ENCODE measurements at regions of chr7 and their contacts with region 1.

Region 1: DNA sequence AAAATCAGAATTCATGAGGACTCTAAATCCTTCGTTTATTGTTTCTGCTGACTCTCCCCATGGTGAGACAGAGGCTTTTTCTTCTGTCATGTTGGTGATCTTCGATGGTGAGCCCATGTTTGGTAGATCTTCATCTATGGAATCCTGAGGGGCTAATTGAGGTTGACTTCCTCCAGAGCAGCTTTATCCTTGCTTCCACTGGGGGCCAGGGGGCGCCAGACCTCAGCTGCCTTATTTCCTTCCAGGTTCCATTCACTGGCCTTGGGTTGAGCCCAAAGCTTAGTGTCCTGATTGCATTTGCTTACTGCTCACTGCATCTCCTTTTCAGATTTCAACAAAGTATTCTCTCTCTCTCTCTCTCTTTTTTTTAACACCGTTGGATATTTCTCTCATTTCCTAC is 80.7 kb downstream of the GCC1 start:
- DNase-seq: peak; percentile 31 to 65 (median 50)
- ATAC-seq: peak; percentile 97
- H3K4me3 ChIP-seq: no peak overlapping the region
- H3K27ac ChIP-seq: no peak overlapping the region
- H3K4me1 ChIP-seq: no peaks in the 10 kb centered on the region
- H3K27me3 ChIP-seq: peaks cover 0 to 1% of the 10 kb centered on the region in 2 experiments; a peak in 1 of 5 replicates
- CTCF ChIP-seq: peak; percentile 79 to 90 (median 85)
- EP300 ChIP-seq: no peak
- POLR2A ChIP-seq: no peak
- RAD21 ChIP-seq: peak; percentile 43 to 68; a peak in 3 of 4 replicates

Region 2: DNA sequence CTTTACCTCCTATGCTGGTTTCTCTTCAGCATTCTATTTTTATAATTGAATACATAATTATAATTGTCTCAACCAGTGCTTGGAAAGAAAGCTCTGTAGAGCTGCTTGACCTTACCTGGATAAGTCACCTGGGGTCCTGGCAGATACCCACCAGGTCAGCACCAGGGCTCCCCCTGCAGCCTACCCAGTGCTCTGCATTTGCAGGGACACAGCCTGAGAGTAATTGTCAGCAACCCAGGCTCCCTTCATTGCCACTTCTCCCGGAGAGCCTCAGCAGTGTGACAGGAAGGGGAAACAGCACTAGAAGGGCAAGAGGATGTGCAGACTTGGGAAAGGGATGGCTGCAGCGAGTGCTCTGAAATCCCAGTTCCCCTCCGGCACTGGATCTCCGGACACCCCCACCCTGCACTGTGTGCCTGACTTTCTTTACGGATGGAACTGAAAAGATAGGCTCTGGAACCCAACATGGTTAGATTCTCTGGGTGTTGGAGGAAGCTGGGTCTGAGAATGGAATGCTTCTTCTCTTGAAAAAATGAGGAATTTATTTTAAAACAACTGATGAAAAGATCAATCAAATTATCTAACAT is 124.6 kb after region 1 on chr7:
- CTCF ChIA-PET with region 1: no interaction called
- POLR2A ChIA-PET with region 1: no interaction called
- in situ Hi-C with region 1: no loop called
- intact Hi-C with region 1: loop called (anchors 5 kb)
- DNase-seq: peak; percentile 51 to 71 (median 60)
- ATAC-seq: peak; percentile 95
- H3K4me3 ChIP-seq: no peak overlapping the region
- H3K27ac ChIP-seq: no peak overlapping the region
- H3K4me1 ChIP-seq: no peaks in the 10 kb centered on the region
- H3K27me3 ChIP-seq: peaks cover 10 to 18% of the 10 kb centered on the region in 2 experiments; a peak in 4 of 5 replicates
- CTCF ChIP-seq: peak; percentile 86 to 91 (median 86)
- EP300 ChIP-seq: no peak
- POLR2A ChIP-seq: no peak
- RAD21 ChIP-seq: peak; percentile 37 to 59

Region 3: GRCh38 chr7:127654404-127655394 is 150.0 kb after region 1 on chr7:
- CTCF ChIA-PET with region 1: no interaction called
- POLR2A ChIA-PET with region 1: no interaction called
- in situ Hi-C with region 1: no loop called
- intact Hi-C with region 1: no loop called
- DNase-seq: peak in 1 of 4 experiments; percentile 35
- ATAC-seq: peak; percentile 6; the same call in 1 of the 3 replicates
- H3K4me3 ChIP-seq: peak overlapping the region; percentile 86; the same call in 1 of the 2 replicates
- H3K27ac ChIP-seq: no peak overlapping the region
- H3K4me1 ChIP-seq: peaks cover 17 to 61% of the 10 kb centered on the region in 2 experiments
- H3K27me3 ChIP-seq: no peaks in the 10 kb centered on the region
- CTCF ChIP-seq: 0 out of 6 replicates have a peak, but pooled peaks of 1 of the 3 experiments have one; percentile 7
- EP300 ChIP-seq: no peak
- POLR2A ChIP-seq: peak; percentile 25; the same call in 1 of the 2 replicates
- RAD21 ChIP-seq: no peak

Region 4: GRCh38 chr7:127692200-127692599 is 187.5 kb after region 1 on chr7:
- CTCF ChIA-PET with region 1: no interaction called
- POLR2A ChIA-PET with region 1: no interaction called
- in situ Hi-C with region 1: no loop called
- intact Hi-C with region 1: no loop called
- DNase-seq: no peak
- ATAC-seq: peak; percentile 49; the same call in 1 of the 3 replicates
- H3K4me3 ChIP-seq: no peak overlapping the region
- H3K27ac ChIP-seq: no peak overlapping the region
- H3K4me1 ChIP-seq: no peaks in the 10 kb centered on the region
- H3K27me3 ChIP-seq: no peaks in the 10 kb centered on the region
- CTCF ChIP-seq: no peak
- EP300 ChIP-seq: no peak
- POLR2A ChIP-seq: no peak
- RAD21 ChIP-seq: no peak